Activated CD4-positive, alpha-beta memory T cell treated with anti-CD3 and anti-CD28 coated beads, Interleukin-2, amount 10 ng/mL, durations not matched to agents 7 days and 5 days (primary cell): ENCODE measurements at regions of chr10 and their contacts with region 1.

Region 1: DNA sequence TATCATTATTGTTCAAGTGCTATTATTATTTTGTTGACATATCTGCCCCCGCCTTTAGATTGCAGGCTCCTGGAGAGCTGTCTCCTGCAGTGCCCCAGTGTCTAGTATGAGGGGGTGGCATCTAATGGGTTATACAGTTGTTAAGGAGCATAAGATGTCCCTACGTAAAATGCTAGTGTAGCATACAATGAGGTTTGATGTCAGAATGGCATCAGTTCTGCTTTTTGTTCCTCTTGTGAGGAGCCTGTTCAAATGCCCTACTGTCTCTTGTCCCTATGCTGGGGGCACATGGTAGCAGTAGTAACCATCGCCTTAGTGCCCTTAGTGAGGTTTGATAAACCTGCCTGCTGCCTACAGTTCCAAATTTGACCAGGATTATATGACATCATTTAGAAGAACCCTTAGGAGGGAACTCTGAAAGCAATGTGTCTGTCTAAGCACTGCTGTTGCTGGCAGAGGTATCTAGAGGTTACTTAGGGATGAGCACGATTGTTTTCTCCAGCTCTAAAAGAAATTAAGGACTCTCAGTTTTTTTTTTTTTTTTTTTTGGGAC is 9.7 kb downstream of the CREM start:
- DNase-seq: no peak
- H3K4me3 Mint-ChIP-seq: peak overlapping the region; percentile 62
- H3K27ac Mint-ChIP-seq: peak overlapping the region; percentile 85
- H3K4me1 Mint-ChIP-seq: peaks cover 53% of the 10 kb centered on the region
- H3K27me3 Mint-ChIP-seq: no peaks in the 10 kb centered on the region

Region 2: GRCh38 chr10:35103882-35104281 is 32.5 kb before region 1 on chr10:
- CTCF ChIA-PET with region 1: no interaction called
- POLR2A ChIA-PET with region 1: no interaction called
- DNase-seq: no peak
- H3K4me3 Mint-ChIP-seq: no peak overlapping the region
- H3K27ac Mint-ChIP-seq: no peak overlapping the region
- H3K4me1 Mint-ChIP-seq: no peaks in the 10 kb centered on the region
- H3K27me3 Mint-ChIP-seq: peaks cover 5% of the 10 kb centered on the region

Region 3: GRCh38 chr10:35150308-35150707 is 14.0 kb after region 1 on chr10:
- CTCF ChIA-PET with region 1: interaction called, 4 read pairs
- POLR2A ChIA-PET with region 1: interaction called, 64 read pairs
- DNase-seq: no peak
- H3K4me3 Mint-ChIP-seq: peak overlapping the region; percentile 33
- H3K27ac Mint-ChIP-seq: peak overlapping the region; percentile 73
- H3K4me1 Mint-ChIP-seq: peaks cover 57% of the 10 kb centered on the region
- H3K27me3 Mint-ChIP-seq: no peaks in the 10 kb centered on the region